HEK293 (cell line): ENCODE measurements at regions of chr17 and their contacts with region 1.

Region 1: DNA sequence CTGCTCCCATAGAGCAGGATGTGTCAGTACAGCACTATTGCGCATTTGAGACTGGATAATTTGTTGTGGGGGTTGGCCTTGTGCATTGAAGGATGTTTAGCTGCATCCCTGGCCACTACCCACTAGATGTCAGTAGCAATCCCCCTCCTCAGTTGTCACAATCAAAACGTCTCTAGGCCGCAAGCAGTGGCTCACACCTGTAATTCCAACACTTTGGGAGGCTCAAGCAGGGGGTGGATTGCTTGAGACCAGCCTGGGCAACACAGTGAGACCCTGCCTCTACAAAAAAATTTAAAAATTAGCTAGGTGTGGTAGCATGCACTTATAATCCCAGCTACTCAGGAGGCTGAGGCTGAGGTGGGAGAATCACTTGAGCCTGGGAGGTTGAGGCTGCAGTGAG is 48.4 kb downstream of the CENPV start:
- H3K4me3 ChIP-seq: no peak overlapping the region
- H3K27ac ChIP-seq: no peak overlapping the region
- H3K4me1 ChIP-seq: no peaks in the 10 kb centered on the region
- CTCF ChIP-seq: peak; percentile 73

Region 2: GRCh38 chr17:16181581-16181980 is 123.2 kb before region 1 on chr17:
- CTCF ChIA-PET with region 1: no interaction called
- POLR2A ChIA-PET with region 1: no interaction called
- H3K4me3 ChIP-seq: no peak overlapping the region
- H3K27ac ChIP-seq: no peak overlapping the region
- H3K4me1 ChIP-seq: no peaks in the 10 kb centered on the region
- CTCF ChIP-seq: no peak

Region 3: DNA sequence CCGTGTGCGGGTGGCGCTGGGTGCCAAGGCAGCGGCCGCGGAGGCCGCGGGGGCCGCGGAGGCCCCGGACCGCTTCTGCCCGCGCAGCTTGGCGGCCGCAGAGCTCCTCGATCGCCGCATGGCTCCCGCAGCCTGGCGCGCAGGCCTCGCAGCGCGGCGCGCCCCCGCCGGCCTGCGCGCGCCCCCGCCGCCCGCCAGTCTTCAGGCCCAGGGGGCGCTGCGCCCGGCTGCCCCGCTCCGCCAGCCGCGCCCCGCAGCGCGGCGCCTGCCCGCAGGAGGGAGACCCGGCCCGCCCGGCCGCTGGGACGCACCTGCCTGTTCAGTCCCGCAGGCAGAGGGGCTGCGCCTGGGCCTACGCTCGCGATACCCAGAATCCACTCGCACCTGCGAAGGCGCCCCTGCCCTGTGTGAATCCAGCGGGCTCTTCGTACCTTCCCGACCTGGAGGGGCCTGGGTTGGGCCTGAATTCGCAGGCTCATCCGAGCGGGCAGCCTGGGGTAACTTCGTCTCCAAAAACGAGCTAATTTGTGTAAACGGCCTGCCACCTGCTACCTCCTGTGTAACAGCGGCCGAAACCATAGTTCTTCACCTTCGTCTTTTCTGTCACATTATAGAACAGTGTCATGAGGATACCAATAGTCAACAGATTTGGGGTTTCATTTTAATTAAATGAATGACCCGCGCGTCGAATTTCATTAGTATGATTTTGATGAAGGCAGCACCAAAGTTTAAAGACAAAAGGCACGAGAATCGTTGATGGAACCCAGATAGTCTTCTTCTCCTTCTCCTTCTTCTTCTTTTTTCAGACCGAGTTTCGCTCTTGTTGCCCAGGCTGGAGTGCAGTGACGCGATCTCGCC is 48.7 kb after region 1 on chr17 and contains the start of gene CENPV:
- CTCF ChIA-PET with region 1: interaction called, 10 read pairs
- POLR2A ChIA-PET with region 1: no interaction called
- H3K4me3 ChIP-seq: peak within 1 kb of the TSS; percentile 77
- H3K27ac ChIP-seq: peak within 1 kb of the TSS; percentile 97
- H3K4me1 ChIP-seq: peaks cover 3% of the 10 kb centered on the region; the same call in 1 of the 2 replicates
- CTCF ChIP-seq: peak; percentile 19; the same call in 1 of the 2 replicates